ENCODE measurements at regions of chr5 and their contacts with region 1.

Region 1: GRCh38 chr5:142922223-142922952 is 152.2 kb downstream of the ARHGAP26 start:
- DNase-seq: no peak

Region 2: GRCh38 chr5:142959683-142960657 is 37.6 kb after region 1 on chr5:
- intact Hi-C with region 1: loop called (anchors 5 kb)
- DNase-seq: no peak

Measured in posterior cingulate gyrus (tissue), 11 donors.